Cardiac septum (tissue), 1 donor: ENCODE measurements at regions of chr22 and their contacts with region 1.

Region 1: DNA sequence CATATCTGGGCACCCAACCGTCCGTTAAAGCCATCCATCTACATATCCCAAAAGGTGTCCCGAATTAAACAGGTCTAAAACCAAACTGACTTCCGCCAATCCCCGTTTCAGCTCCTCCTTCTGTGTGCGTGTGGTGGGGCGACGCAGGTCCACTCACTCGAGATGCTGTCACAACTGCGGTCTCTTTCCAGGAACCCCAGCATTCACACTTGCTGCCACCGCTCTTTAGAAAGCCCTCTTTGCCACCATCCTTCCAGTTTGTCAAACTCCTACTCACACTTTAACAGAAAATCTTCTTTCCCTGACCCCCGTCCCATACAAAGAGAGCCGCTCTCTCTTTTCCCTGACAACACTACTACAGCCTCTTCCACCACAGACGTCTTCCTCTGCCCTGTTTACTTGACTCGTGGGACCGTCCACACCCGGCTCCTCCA is 467 bp downstream of the ESS2 start:
- DNase-seq: no peak

Region 2: GRCh38 chr22:18091916-18092526 is 1052.0 kb before region 1 on chr22:
- intact Hi-C with region 1: no loop called
- DNase-seq: peak; percentile 85

Region 3: DNA sequence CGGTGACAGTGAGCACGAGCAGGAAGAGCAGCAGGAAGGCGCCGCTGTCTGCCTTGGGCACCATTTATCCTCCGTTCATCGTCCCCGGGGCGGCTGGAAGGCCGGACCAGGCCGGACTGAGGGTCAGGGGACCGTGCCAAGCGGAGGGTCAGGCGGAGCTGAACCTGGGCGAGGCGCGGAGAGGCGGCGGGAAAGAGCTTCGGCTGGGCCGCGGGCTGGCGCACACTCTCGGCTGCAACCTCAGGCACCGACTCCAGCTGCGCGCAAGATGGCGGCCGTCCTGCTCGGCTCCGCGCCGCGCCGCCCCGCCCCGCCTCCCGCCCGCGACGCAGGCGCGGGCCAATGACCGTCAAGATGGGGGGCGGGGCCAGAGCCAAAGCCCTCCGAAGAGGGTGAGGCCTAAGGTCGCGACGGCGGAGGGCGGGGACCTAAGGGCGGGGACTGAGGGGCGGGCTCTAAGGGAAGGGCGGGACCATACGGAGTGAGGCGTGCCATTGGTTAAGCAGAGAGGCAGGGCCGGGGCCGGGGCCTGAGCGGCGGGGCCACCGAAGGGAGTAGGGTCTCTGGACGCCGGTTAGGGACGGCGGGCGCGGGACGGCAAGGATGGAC is 21.7 kb before region 1 on chr22 and contains the start of gene DGCR2:
- intact Hi-C with region 1: loop called (anchors 1 kb)
- DNase-seq: peak; percentile 99
- total RNA-seq, gene DGCR2: 35.2 TPM

Region 4: DNA sequence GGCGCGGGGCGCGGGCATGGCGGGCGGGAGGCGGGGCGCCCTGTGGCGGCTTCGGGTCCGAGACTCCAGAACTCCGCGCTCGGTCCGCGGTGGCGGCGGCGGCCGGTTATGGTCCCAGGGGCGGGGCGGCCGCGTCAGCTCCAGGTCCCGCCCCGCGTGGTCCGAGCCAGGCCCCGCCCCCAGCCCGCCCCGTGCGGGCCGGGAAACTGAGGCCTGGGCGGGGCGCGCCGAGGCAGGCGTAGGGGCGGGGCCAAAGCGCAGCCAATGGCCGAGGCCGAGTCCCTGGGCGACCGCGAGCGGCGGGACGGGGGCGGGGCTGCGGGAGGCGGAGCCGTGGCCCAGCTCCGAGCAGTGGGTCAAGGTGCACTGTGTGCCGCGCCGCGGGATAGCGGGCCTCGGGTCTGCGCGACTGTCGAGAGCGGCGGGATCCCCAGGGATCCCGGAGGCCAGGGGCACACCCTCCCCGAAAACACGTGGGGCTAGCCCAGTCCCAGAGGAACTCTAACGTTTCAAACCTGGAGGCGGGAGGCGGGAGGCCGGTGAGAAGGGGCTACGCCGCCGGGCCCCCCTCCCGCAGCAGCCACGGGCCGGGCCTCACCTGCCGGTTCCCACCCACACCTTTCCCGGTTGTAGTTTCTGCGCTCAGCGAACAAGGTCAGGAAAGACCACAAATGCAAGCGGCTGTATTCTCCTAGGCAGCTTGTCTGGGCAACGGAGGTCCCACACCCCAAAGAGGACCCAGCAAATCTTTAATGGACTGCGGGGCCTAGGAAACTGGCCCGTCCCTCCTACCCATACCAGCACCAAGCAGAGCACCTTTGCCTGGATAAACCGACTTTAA is 34.9 kb after region 1 on chr22 and contains the start of gene SLC25A1:
- intact Hi-C with region 1: loop called (anchors 2 kb)
- DNase-seq: peak; percentile 95
- total RNA-seq, gene SLC25A1: 22.2 TPM

Region 5: GRCh38 chr22:19201869-19202798 is 58.1 kb after region 1 on chr22:
- intact Hi-C with region 1: loop called (anchors 10 kb)
- DNase-seq: no peak

Region 6: DNA sequence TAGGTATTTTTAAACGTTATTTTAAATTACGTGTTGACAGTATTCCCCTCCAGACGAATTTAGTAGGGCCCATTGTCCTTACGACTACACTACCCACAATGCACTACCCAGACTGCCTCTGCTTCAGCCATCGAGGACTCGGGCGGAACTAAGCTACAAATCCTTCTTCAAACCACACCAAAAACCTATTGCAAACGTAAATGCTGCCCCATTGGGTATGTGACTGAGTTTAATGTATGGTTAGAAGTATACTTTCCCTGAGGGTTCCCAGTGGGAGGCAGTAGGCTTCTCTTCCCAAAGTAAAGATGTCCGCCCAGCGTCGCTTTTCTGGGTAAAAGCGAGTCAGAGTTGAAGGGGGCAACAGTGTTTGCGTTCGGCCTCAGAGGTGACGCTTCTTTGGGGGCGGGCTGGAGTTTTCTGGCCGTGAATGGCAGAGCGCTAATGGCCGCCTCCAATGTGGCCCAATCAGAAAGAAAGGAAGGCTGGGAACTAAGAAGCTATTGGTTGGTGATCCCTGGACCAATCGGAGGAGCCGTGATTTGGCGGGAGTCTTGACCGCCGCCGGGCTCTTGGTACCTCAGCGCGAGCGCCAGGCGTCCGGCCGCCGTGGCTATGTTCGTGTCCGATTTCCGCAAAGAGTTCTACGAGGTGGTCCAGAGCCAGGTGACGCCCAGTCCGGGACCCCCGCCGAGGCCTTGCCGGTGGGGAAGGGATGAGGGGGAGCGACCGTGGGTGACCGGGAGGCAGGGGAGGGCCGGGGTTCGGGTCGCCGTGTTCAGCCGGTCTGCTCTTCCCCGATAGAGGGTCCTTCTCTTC is 335.6 kb after region 1 on chr22 and contains the start of gene CDC45:
- intact Hi-C with region 1: loop called (anchors 1 kb)
- DNase-seq: peak; percentile 98
- total RNA-seq, gene CDC45: not detected

Region 7: DNA sequence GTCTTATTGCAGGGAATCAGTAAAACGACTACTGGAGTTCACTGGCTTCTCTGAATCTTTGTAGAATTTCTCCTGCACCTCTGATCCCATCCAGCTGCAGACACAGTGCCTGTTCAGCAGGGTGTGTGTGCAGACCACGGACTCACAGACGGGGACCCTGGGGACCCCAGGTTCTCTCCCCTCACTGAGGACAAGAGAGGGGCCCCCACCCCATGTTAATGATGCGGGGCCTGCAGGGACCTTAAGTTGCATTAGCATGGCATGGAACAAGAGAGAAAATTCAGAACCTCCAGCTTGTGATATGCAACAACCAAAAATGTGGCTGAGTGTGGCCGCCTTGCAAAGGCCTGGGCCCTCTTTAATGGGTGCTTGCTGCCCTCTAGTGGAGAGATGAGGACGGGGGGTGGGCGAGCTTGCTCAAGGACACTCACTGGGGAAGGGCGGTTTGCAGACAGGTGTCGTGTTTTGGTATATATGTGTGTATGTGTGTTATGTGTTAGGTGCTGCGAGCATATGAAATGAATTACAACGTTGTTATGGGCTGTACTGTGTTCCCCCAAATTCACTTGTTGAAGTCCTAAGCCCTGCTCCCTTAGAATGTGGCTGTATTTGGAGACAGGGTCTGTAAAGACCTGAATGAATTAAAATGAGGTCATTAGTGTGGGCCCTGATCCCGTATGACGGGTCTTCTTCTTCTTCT is 485.9 kb after region 1 on chr22:
- intact Hi-C with region 1: loop called (anchors 10 kb)
- DNase-seq: peak; percentile 86